SK-N-SH (cell line): ENCODE measurements at regions of chr13 and their contacts with region 1.

Region 1: GRCh38 chr13:33735276-33735675 is 82.7 kb upstream of the RFC3 start:
- DNase-seq: no peak
- H3K4me3 ChIP-seq: no peak overlapping the region
- H3K27ac ChIP-seq: no peak overlapping the region
- H3K4me1 ChIP-seq: peaks cover 0 to 5% of the 10 kb centered on the region in 2 experiments; a peak in 1 of 4 replicates
- H3K27me3 ChIP-seq: no peaks in the 10 kb centered on the region
- CTCF ChIP-seq: no peak
- EP300 ChIP-seq: no peak
- RAD21 ChIP-seq: no peak

Region 2: GRCh38 chr13:33723772-33724435 is 11.4 kb before region 1 on chr13:
- CTCF ChIA-PET with region 1: interaction called, 13 read pairs
- POLR2A ChIA-PET with region 1: no interaction called
- DNase-seq: peak; percentile 66
- H3K4me3 ChIP-seq: peak overlapping the region in 1 of 2 experiments; percentile 38; a peak in 1 of 4 replicates
- H3K27ac ChIP-seq: peak overlapping the region in 1 of 2 experiments; percentile 86; a peak in 2 of 4 replicates
- H3K4me1 ChIP-seq: peaks cover 8 to 19% of the 10 kb centered on the region in 2 experiments; a peak in 3 of 4 replicates
- H3K27me3 ChIP-seq: no peaks in the 10 kb centered on the region
- CTCF ChIP-seq: peak; percentile 83
- EP300 ChIP-seq: no peak
- RAD21 ChIP-seq: peak; percentile 95